ENCODE measurements at regions of chr1 and their contacts with region 1.

Region 1: GRCh38 chr1:229258031-229258756 is 12.7 kb upstream of the RAB4A start:
- DNase-seq: peak; percentile 54
- ATAC-seq: peak; percentile 82 to 83

Region 2: DNA sequence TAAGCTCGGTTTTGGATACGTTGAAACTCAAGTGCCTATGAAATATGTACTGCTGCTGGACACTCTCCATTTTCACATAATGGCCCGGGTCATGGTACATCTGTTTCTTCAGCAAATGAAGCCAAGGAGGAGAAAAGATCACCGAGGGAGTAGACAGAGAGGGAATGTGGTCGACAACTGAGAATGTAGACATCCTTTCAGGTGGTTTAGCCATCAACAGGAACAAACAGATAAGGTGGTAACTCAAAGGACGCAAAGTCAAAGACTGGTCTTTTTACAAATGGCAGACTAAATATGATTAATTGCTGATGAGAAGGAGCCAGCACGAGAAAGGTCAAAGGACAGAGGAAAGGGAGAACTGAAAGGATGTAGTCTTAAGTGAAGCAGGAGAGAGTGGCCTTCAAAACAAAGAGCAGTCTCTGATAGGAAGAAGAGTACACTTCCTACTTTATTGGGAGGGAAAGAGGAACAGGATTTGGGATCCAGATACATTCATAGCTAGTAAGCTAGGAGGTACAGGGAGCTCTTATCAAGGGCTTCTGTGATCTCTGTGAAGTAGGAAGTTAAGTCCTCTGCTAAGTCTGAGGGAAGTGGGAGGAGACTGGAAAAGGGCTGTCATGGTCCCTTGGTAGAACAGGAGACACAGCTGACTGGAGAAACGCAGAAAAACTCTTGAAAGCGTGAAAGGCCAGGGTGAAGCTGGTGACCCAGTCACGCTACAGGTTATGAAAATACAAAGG is 221.6 kb after region 1 on chr1:
- intact Hi-C with region 1: loop called (anchors 1 to 5 kb)
- DNase-seq: no peak
- ATAC-seq: peak; percentile 20 to 42

Region 3: GRCh38 chr1:229514578-229515275 is 256.5 kb after region 1 on chr1:
- intact Hi-C with region 1: loop called (anchors 2 to 10 kb)
- DNase-seq: peak; percentile 46
- ATAC-seq: peak; percentile 78 to 87

Measured in left cardiac atrium (tissue), 4 donors.